ENCODE measurements at regions of chr17 and their contacts with region 1.

Region 1: GRCh38 chr17:28041068-28041843 is 1.2 kb upstream of the NLK start:
- DNase-seq: peak; percentile 100
- H3K4me3 ChIP-seq: peak overlapping the region; percentile 72 to 97 (median 94)
- H3K27ac ChIP-seq: peak overlapping the region; percentile 87 to 97 (median 94)
- H3K4me1 ChIP-seq: peaks cover 20 to 45% (median 33%) of the 10 kb centered on the region in 4 donors
- H3K27me3 ChIP-seq: no peaks in the 10 kb centered on the region
- CTCF ChIP-seq: no peak
- EP300 ChIP-seq: no peak
- POLR2A ChIP-seq: peak; percentile 64

Region 2: DNA sequence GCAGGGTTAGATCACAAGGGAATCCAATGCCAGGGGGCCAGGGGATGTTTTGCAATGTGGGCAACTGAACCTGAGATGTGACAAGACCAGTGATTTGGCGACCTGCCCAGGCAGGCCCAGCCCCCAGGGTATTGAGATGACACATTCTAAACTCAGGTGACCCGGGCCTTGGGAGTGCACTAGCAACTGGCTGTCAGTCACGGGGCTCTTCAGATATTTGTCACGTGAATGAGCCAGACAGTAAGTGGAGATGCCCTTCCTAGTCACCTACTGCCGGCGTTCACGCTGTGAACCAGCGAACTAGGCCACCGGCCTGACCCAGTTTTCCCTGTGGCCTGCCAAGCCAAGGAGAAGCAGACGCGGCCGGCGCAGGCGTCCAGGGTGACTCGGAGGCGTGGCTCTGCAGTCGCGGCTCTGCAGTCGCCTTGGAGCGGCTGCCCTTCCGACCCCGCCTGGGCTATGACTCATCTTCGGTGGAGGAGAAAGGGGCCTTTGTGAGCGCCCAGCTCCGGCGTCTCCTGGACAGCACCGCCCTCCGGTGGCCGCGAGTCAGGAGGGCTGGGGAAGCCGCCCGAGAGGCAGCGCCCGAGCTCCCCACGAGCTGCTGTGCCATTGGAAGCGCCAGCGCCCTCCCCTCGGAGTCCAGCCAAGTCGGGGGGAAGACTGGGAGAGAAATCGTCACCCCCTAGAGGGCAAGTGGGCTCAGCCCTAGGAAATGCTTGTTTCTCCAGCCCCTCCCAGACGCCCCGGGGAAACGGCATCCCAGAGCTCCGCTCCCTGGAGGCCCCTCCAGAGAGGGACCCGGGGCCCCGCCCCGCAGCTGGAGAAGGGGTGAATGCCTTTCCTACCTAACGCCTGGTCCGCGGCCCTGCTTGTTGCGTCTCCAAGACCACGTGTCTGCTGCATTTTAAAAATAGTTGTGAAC is 708.5 kb before region 1 on chr17:
- in situ Hi-C with region 1: loop called in 1 of 4 experiments (anchors 25 kb)
- intact Hi-C with region 1: no loop called
- DNase-seq: peak; percentile 98
- H3K4me3 ChIP-seq: peak overlapping the region in 3 of 4 donors; percentile 44 to 67 (median 46)
- H3K27ac ChIP-seq: peak overlapping the region; percentile 88 to 95 (median 90)
- H3K4me1 ChIP-seq: peaks cover 5 to 18% (median 16%) of the 10 kb centered on the region in 4 donors
- H3K27me3 ChIP-seq: no peaks in the 10 kb centered on the region
- CTCF ChIP-seq: peak; percentile 77 to 97 (median 86)
- EP300 ChIP-seq: peak; percentile 33
- POLR2A ChIP-seq: no peak

Region 3: GRCh38 chr17:27939474-27940465 is 101.5 kb before region 1 on chr17:
- in situ Hi-C with region 1: no loop called
- intact Hi-C with region 1: no loop called
- DNase-seq: no peak
- H3K4me3 ChIP-seq: no peak overlapping the region
- H3K27ac ChIP-seq: no peak overlapping the region
- H3K4me1 ChIP-seq: no peaks in the 10 kb centered on the region
- H3K27me3 ChIP-seq: no peaks in the 10 kb centered on the region
- CTCF ChIP-seq: no peak
- EP300 ChIP-seq: no peak
- POLR2A ChIP-seq: no peak

Region 4: DNA sequence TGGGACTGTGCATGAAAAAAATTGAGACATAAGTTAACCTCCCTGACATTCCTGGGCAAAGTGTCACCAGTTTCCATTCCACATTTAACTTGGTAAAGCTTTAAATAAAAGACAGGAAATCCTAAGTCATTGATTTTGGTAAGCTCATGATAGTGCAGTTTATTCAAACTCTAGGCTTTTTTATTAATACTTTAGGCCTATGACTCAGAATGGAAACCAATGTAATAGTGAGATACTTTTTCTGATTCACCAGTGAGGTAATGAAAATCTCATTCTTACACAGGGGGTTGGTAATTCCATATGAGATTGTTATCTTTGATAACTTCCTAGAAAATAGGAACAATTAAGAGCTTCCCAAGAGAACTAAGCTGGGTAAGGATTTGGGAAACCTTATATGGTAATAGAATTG is 92.3 kb after region 1 on chr17:
- in situ Hi-C with region 1: loop called in 1 of 4 experiments (anchors 25 kb)
- intact Hi-C with region 1: no loop called
- DNase-seq: no peak
- H3K4me3 ChIP-seq: no peak overlapping the region
- H3K27ac ChIP-seq: no peak overlapping the region
- H3K4me1 ChIP-seq: peaks cover 0 to 11% (median 6%) of the 10 kb centered on the region in 4 donors
- H3K27me3 ChIP-seq: no peaks in the 10 kb centered on the region
- CTCF ChIP-seq: no peak
- EP300 ChIP-seq: no peak
- POLR2A ChIP-seq: no peak

Region 5: GRCh38 chr17:28193241-28193640 is 152.0 kb after region 1 on chr17:
- in situ Hi-C with region 1: loop called in 1 of 4 experiments (anchors 25 kb)
- intact Hi-C with region 1: no loop called
- DNase-seq: peak; percentile 21
- H3K4me3 ChIP-seq: no peak overlapping the region
- H3K27ac ChIP-seq: no peak overlapping the region
- H3K4me1 ChIP-seq: no peaks in the 10 kb centered on the region
- H3K27me3 ChIP-seq: no peaks in the 10 kb centered on the region
- CTCF ChIP-seq: no peak
- EP300 ChIP-seq: no peak
- POLR2A ChIP-seq: no peak

Region 6: DNA sequence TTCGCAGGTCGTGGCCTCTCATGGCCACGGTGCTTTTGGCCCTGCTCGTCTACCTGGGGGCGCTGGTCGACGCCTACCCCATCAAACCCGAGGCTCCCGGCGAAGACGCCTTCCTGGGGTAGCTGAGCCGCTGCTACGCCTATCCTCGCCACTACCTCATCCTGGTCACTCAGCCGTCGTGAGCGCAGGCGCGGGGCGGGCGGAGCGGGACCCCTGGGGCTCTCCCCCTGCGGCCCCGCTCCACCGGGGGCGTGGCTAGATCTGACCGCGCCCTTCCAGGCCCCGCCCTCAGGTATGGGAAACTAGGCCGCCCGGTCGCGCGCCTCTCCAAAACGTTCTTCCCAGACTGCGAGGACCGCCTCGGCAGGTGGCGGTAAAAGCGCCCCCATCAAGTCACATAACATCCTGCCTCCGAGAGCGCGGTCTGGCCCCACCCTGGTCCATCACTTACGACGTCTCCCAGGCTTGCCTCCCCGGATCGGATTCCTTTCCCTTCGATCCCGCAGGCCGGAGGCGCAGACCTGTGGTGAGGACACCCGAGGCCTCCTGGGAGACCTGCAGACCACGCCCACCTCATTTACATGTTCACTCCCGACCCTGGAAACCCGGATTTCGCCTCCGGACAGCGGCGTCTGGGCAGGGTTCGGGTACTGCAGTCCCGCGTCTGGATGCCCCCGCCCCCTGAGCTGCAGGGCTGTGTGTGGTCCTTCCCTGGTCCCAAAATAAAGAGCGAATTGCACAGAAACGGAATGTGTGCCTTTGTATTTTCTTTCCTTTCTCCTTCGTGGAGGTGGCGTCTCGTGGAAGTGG is 186.3 kb after region 1 on chr17:
- in situ Hi-C with region 1: loop called in 1 of 4 experiments (anchors 25 kb)
- intact Hi-C with region 1: no loop called
- DNase-seq: peak; percentile 81
- H3K4me3 ChIP-seq: peak overlapping the region in 3 of 4 donors; percentile 31 to 49 (median 37)
- H3K27ac ChIP-seq: peak overlapping the region in 3 of 4 donors; percentile 11 to 61 (median 19)
- H3K4me1 ChIP-seq: peaks cover 0 to 13% (median 11%) of the 10 kb centered on the region in 4 donors
- H3K27me3 ChIP-seq: peaks cover 32% of the 10 kb centered on the region
- CTCF ChIP-seq: peak in 1 of 5 experiments; percentile 40
- EP300 ChIP-seq: no peak
- POLR2A ChIP-seq: peak; percentile 51